ENCODE measurements at regions of chr1 and their contacts with region 1.

Region 1: GRCh38 chr1:163006051-163006834 is 62.9 kb upstream of the RGS4 start:
- DNase-seq: no peak
- ATAC-seq: no peak
- H3K4me3 ChIP-seq: no peak overlapping the region
- H3K27ac ChIP-seq: no peak overlapping the region
- H3K4me1 ChIP-seq: no peaks in the 10 kb centered on the region
- H3K27me3 ChIP-seq: peaks cover 0 to 2% (median 0%) of the 10 kb centered on the region in 3 donors
- CTCF ChIP-seq: no peak

Region 2: DNA sequence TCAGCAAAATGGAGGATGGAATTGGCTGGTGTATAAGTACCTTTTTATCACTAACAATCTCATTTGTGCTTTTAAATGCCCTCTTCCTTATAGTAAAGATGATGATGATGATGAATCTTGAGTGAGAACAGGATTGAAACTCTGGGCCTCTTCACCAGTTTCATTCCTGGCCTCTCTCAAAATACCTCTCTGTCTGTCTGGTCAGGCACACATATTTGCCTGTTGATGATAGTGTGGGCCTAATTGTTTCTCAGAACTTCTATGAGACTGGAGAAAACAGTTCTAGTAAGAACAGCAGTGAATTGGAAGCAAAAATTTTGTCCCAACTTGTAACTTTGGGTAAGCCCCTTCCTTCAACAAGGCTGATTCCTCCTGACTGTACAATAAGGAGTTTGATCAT is 31.4 kb before region 1 on chr1:
- intact Hi-C with region 1: loop called in 1 of 2 experiments (anchors 2 kb)
- DNase-seq: no peak
- ATAC-seq: no peak
- H3K4me3 ChIP-seq: no peak overlapping the region
- H3K27ac ChIP-seq: no peak overlapping the region
- H3K4me1 ChIP-seq: peaks cover 11% of the 10 kb centered on the region
- H3K27me3 ChIP-seq: no peaks in the 10 kb centered on the region
- CTCF ChIP-seq: no peak

Measured in psoas muscle (tissue), 8 donors.